H1 (cell line): ENCODE measurements at regions of chr11 and their contacts with region 1.

Region 1: GRCh38 chr11:10653926-10654810 is 39.4 kb downstream of the IRAG1 start:
- DNase-seq: no peak
- H3K4me3 ChIP-seq: no peak overlapping the region
- H3K27ac ChIP-seq: no peak overlapping the region
- H3K4me1 ChIP-seq: peaks cover 0 to 4% (median 0%) of the 10 kb centered on the region in 4 experiments; a peak in 3 of 7 replicates
- H3K27me3 ChIP-seq: no peaks in the 10 kb centered on the region
- CTCF ChIP-seq: peak in 2 of 3 experiments; percentile 65 to 71; a peak in 3 of 4 replicates
- EP300 ChIP-seq: no peak
- POLR2A ChIP-seq: no peak
- RAD21 ChIP-seq: peak; percentile 87 to 90

Region 2: GRCh38 chr11:10564696-10565318 is 89.4 kb before region 1 on chr11:
- CTCF ChIA-PET with region 1: interaction called, 11 read pairs
- POLR2A ChIA-PET with region 1: no interaction called
- DNase-seq: no peak
- H3K4me3 ChIP-seq: no peak overlapping the region
- H3K27ac ChIP-seq: no peak overlapping the region
- H3K4me1 ChIP-seq: peaks cover 0 to 6% (median 0%) of the 10 kb centered on the region in 4 experiments; a peak in 4 of 7 replicates
- H3K27me3 ChIP-seq: no peaks in the 10 kb centered on the region
- CTCF ChIP-seq: peak in 2 of 3 experiments; percentile 17 to 31; a peak in 2 of 4 replicates
- EP300 ChIP-seq: no peak
- POLR2A ChIP-seq: no peak
- RAD21 ChIP-seq: peak; percentile 32 to 48

Region 3: GRCh38 chr11:10623797-10624761 is 30.1 kb before region 1 on chr11:
- CTCF ChIA-PET with region 1: interaction called, 36 read pairs
- POLR2A ChIA-PET with region 1: interaction called, 3 read pairs
- DNase-seq: peak; percentile 41 to 84
- H3K4me3 ChIP-seq: no peak overlapping the region
- H3K27ac ChIP-seq: no peak overlapping the region
- H3K4me1 ChIP-seq: no peaks in the 10 kb centered on the region; a peak in 1 of 7 replicates
- H3K27me3 ChIP-seq: no peaks in the 10 kb centered on the region
- CTCF ChIP-seq: peak; percentile 74 to 84 (median 82)
- EP300 ChIP-seq: no peak
- POLR2A ChIP-seq: no peak
- RAD21 ChIP-seq: peak; percentile 89 to 92

Region 4: DNA sequence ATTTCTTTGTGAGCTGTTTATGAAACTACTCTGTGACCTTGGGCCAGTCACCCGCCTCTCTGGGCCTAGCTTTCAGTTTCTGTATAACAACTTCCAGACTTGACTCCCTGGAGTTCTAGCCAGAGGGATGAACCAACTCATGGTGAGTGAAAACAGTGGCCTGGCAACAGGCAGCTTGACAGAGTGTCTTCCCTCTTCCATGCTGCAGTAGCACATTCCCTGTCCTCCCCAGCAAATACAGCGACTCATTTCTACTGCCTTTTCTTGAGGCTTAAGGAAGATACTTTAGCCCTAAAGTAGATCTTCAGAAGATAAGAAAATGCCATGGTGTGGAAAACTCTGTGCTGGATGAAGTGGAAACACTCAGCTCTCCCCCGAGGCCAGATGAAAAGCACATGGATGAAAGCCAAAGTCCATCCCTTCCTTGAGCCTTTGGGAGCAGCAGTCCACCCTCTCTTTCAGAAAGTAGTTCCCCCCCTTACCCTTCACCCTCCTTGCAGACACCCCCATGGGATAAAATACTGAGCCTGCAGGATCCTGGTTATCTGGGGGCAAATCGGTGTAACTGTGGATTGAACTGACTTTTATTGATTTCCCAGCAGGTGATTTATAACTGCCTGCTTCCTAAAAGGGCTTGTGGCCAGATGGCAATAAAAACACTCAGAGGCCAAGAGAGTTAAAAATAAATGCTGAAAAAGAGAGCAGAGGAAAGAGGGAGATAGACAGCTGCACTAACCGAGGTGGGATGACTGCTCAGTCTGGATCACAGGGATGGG is 15.3 kb after region 1 on chr11:
- CTCF ChIA-PET with region 1: interaction called, 92 read pairs
- POLR2A ChIA-PET with region 1: no interaction called
- DNase-seq: no peak
- H3K4me3 ChIP-seq: no peak overlapping the region
- H3K27ac ChIP-seq: no peak overlapping the region
- H3K4me1 ChIP-seq: no peaks in the 10 kb centered on the region
- H3K27me3 ChIP-seq: no peaks in the 10 kb centered on the region
- CTCF ChIP-seq: no peak
- EP300 ChIP-seq: no peak
- POLR2A ChIP-seq: no peak
- RAD21 ChIP-seq: no peak

Region 5: GRCh38 chr11:10716127-10716526 is 62.0 kb after region 1 on chr11:
- CTCF ChIA-PET with region 1: interaction called, 11 read pairs
- POLR2A ChIA-PET with region 1: no interaction called
- DNase-seq: no peak
- H3K4me3 ChIP-seq: no peak overlapping the region
- H3K27ac ChIP-seq: no peak overlapping the region
- H3K4me1 ChIP-seq: no peaks in the 10 kb centered on the region
- H3K27me3 ChIP-seq: no peaks in the 10 kb centered on the region
- CTCF ChIP-seq: no peak
- EP300 ChIP-seq: no peak
- POLR2A ChIP-seq: no peak
- RAD21 ChIP-seq: no peak

Region 6: GRCh38 chr11:10735481-10736475 is 81.6 kb after region 1 on chr11:
- CTCF ChIA-PET with region 1: interaction called, 17 read pairs
- POLR2A ChIA-PET with region 1: no interaction called
- DNase-seq: peak; percentile 90 to 98
- H3K4me3 ChIP-seq: peak overlapping the region in 1 of 4 experiments; percentile 47; a peak in 4 of 8 replicates
- H3K27ac ChIP-seq: no peak overlapping the region
- H3K4me1 ChIP-seq: peaks cover 0 to 4% (median 3%) of the 10 kb centered on the region in 4 experiments; a peak in 4 of 7 replicates
- H3K27me3 ChIP-seq: no peaks in the 10 kb centered on the region; a peak in 1 of 7 replicates
- CTCF ChIP-seq: peak; percentile 85 to 95 (median 93)
- EP300 ChIP-seq: no peak; a peak in 1 of 3 replicates
- POLR2A ChIP-seq: 0 out of 3 replicates have a peak, but pooled peaks of 1 of the 2 experiments have one; percentile 23
- RAD21 ChIP-seq: peak; percentile 99